ENCODE measurements at regions of chrX and their contacts with region 1.

Region 1: DNA sequence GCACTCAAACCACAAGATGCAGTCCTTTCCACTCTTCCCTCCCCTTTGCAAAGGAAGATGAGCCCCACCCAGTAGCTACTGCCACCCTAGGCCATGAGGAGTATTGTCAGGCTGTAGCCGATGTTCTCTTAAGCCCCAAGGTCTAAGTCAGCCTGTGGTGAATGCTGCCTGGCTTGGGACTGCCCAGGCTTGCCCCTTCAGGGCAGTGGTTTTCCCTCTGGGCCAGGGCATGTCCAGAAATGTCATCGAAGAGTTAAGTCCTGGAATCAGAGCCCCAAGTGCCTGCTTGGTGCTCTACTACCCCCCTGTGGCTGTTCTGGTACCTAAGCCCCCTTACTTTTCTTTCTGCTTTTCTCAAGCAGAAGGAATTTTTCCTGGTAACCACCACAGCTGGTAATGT is 11.8 kb upstream of the PGK1 start:
- DNase-seq: peak; percentile 24
- H3K4me3 Mint-ChIP-seq: no peak overlapping the region
- H3K27ac Mint-ChIP-seq: no peak overlapping the region
- H3K4me1 Mint-ChIP-seq: no peaks in the 10 kb centered on the region
- H3K27me3 Mint-ChIP-seq: no peaks in the 10 kb centered on the region

Region 2: GRCh38 chrX:78024349-78025108 is 67.8 kb before region 1 on chrX:
- CTCF ChIA-PET with region 1: no interaction called
- intact Hi-C with region 1: loop called (anchors 2 kb)
- DNase-seq: peak; percentile 8
- H3K4me3 Mint-ChIP-seq: no peak overlapping the region
- H3K27ac Mint-ChIP-seq: no peak overlapping the region
- H3K4me1 Mint-ChIP-seq: peaks cover 3% of the 10 kb centered on the region
- H3K27me3 Mint-ChIP-seq: no peaks in the 10 kb centered on the region

Measured in activated naive CD4-positive, alpha-beta T cell treated with anti-CD3 and anti-CD28 coated beads for 36 hours (primary cell).